ENCODE measurements at regions of chrX and their contacts with region 1.

Region 1: DNA sequence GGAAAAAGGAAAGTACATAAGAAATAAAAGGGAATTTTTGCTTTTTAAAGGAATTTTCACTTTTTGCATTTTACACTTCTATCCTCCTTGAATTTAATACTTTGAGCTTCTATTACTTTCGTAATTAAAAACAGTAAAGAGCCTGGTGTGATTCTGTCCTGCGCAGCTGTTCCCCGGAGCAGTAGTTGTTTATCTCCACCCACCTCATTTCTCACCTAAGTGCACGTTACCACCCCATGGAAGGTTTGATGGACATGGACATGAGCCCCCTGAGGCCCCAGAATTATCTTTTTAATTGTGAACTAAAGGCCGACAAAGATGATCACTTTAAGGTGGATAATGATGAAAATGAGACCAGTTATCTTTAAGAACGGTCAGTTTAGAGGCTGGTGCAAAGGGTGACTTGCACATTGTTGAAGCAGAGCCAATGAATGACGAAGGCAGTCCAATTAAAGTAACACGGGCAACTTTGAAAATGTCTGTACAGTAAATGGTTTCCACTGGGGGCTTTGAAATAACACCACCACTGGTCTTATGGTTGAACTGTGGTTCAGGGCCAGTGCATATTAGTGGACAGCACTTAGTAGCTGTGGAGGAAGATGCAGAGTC is 52.1 kb upstream of the TEX13D start:
- DNase-seq: no peak
- H3K4me3 Mint-ChIP-seq: peak overlapping the region; percentile 13
- H3K27ac Mint-ChIP-seq: no peak overlapping the region
- H3K4me1 Mint-ChIP-seq: peaks cover 16% of the 10 kb centered on the region
- H3K27me3 Mint-ChIP-seq: no peaks in the 10 kb centered on the region

Region 2: GRCh38 chrX:124239911-124240310 is 40.5 kb before region 1 on chrX:
- CTCF ChIA-PET with region 1: no interaction called
- POLR2A ChIA-PET with region 1: no interaction called
- intact Hi-C with region 1: loop called (anchors 1 kb)
- DNase-seq: peak; percentile 61
- H3K4me3 Mint-ChIP-seq: peak overlapping the region; percentile 46
- H3K27ac Mint-ChIP-seq: peak overlapping the region; percentile 70
- H3K4me1 Mint-ChIP-seq: peaks cover 44% of the 10 kb centered on the region
- H3K27me3 Mint-ChIP-seq: no peaks in the 10 kb centered on the region

Region 3: GRCh38 chrX:124300405-124300804 is 20.0 kb after region 1 on chrX:
- CTCF ChIA-PET with region 1: no interaction called
- POLR2A ChIA-PET with region 1: no interaction called
- intact Hi-C with region 1: loop called (anchors 1 kb)
- DNase-seq: no peak
- H3K4me3 Mint-ChIP-seq: no peak overlapping the region
- H3K27ac Mint-ChIP-seq: peak overlapping the region; percentile 58
- H3K4me1 Mint-ChIP-seq: peaks cover 32% of the 10 kb centered on the region
- H3K27me3 Mint-ChIP-seq: no peaks in the 10 kb centered on the region